ENCODE measurements at regions of chr19 and their contacts with region 1.

Region 1: DNA sequence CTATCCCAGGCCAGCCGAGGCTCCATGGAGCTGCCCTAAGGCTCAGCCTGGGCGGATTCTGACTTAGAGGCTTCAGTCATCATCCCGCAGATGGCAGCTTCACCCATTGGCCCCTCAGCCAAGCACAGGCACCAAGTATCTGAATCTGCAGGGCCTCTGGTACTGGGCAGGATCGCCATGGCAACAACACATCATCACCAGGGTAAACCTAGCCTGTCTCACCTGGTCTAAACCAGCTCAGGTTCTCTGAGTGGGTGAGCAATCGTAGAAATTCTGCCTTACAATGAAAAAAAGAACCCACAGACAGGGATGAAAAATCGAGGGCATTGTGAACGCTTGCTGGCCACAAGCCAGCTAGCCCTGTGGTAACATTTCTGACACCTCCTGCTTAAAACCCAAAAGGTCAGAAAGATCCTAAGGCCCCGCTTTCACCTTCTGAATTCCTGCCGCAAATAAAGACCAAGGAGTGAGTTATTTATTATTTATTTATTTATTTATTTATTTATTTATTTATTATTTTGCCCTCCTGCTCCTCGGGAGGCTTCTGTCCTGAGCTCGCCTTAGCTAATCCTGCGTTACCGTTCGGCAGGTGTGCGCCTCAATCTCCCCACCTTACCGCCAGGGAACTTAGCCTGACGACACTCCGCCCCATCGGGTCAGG is 12.0 kb upstream of the CEACAM21 start:
- DNase-seq: no peak
- ATAC-seq: no peak

Region 2: GRCh38 chr19:41327576-41328156 is 236.3 kb before region 1 on chr19:
- intact Hi-C with region 1: no loop called
- DNase-seq: peak; percentile 83
- ATAC-seq: peak; percentile 35

Region 3: DNA sequence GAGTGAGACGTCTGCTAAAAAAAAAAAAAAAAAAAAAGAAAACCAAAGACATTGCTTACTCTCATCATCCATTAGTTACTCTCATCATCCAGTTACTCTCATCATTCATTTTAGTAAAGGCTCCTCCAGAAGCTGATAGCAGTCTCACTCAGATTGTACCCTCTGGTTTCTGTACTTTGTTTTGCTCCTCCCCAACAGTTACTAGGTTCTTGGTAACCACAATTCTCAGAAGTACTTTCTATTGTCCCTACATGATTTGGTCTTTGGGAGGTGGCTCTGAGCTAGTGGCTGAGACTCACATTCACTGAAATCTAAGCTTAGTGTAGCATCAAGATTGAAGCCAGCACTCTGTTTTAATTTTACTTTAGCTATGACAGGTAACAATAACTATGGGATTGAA is 106.7 kb before region 1 on chr19:
- intact Hi-C with region 1: loop called (anchors 10 kb)
- DNase-seq: no peak
- ATAC-seq: no peak

Region 4: GRCh38 chr19:41616792-41617621 is 53.0 kb after region 1 on chr19:
- intact Hi-C with region 1: no loop called
- DNase-seq: no peak
- ATAC-seq: no peak

Measured in left ventricle myocardium superior (tissue), 1 donor.